ENCODE measurements at regions of chr20 and their contacts with region 1.

Region 1: GRCh38 chr20:10536531-10536930 is 101.4 kb downstream of the SLX4IP start:
- DNase-seq: peak; percentile 53
- ATAC-seq: no peak
- H3K4me3 Mint-ChIP-seq: no peak overlapping the region
- H3K27ac Mint-ChIP-seq: no peak overlapping the region
- H3K4me1 Mint-ChIP-seq: peaks cover 11% of the 10 kb centered on the region
- H3K27me3 Mint-ChIP-seq: no peaks in the 10 kb centered on the region

Region 2: GRCh38 chr20:10443936-10444335 is 92.6 kb before region 1 on chr20:
- CTCF ChIA-PET with region 1: no interaction called
- POLR2A ChIA-PET with region 1: no interaction called
- DNase-seq: no peak
- ATAC-seq: no peak
- H3K4me3 Mint-ChIP-seq: no peak overlapping the region
- H3K27ac Mint-ChIP-seq: no peak overlapping the region
- H3K4me1 Mint-ChIP-seq: peaks cover 24% of the 10 kb centered on the region
- H3K27me3 Mint-ChIP-seq: no peaks in the 10 kb centered on the region

Region 3: GRCh38 chr20:10472871-10473270 is 63.7 kb before region 1 on chr20:
- CTCF ChIA-PET with region 1: interaction called, 13 read pairs
- POLR2A ChIA-PET with region 1: no interaction called
- DNase-seq: no peak
- ATAC-seq: no peak
- H3K4me3 Mint-ChIP-seq: no peak overlapping the region
- H3K27ac Mint-ChIP-seq: no peak overlapping the region
- H3K4me1 Mint-ChIP-seq: peaks cover 10% of the 10 kb centered on the region
- H3K27me3 Mint-ChIP-seq: no peaks in the 10 kb centered on the region

Region 4: DNA sequence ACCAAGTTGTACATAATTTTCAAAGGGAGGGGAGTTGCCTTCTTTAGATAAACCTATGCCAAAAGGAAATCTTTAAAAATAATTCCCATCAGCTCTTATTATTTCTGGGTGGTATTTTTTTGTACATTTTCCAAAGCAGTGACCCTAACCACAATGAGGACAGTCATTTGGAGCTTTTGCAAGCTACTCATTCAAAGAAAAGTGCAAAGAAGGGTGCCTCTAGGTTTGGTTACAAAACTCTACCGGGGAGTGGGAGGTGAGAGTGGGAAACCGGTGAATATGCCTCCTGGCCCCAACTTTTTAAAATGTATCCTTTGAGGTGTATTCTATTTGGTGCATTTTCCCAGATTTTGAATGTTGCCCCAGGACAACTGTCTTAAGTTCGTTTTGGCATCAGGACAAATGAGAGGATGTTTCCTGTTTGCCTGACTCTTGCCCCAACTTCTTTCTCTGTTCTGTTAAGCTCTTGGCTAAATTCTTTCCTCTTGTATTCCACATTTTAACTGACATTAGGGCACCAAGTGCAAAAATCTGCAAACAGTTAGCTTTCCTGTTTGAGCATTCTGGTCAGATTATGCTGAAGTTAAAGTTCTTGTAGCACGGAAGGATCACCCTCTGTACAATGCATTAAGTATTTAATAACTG is 22.5 kb before region 1 on chr20:
- CTCF ChIA-PET with region 1: interaction called, 16 read pairs
- POLR2A ChIA-PET with region 1: no interaction called
- DNase-seq: no peak
- ATAC-seq: no peak
- H3K4me3 Mint-ChIP-seq: no peak overlapping the region
- H3K27ac Mint-ChIP-seq: no peak overlapping the region
- H3K4me1 Mint-ChIP-seq: peaks cover 35% of the 10 kb centered on the region
- H3K27me3 Mint-ChIP-seq: no peaks in the 10 kb centered on the region

Region 5: DNA sequence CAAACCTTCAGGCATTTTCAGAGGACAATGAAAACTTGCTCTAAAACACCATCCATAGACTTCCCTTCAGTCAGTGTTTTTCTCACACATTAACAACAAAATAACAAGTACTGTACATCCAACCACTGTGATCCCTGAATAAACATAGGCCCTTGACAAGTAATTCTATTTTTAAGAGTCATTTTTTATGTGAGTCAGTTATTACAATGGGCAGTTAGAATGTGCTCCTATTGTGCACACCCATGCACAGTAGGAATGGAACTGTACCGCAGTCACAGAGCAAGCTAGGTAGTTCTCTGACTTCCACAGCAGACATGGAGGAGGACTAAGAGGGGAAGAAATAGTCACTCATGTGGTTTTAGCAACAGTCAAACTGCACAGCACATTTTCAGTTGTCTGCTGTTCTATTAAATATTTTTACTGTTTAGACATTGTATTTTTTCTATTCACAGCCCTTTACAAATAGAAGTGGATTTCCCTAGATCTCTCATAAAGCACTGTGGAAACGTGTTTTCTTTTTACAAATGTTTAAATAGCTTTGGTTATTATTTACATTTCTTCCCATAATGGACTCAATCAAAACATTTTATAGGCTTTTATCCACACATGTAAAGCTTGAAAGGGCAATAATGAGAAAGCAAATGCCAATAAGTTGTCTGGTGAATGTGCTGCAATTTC is 36.9 kb after region 1 on chr20:
- CTCF ChIA-PET with region 1: no interaction called
- POLR2A ChIA-PET with region 1: no interaction called
- DNase-seq: no peak
- ATAC-seq: no peak
- H3K4me3 Mint-ChIP-seq: no peak overlapping the region
- H3K27ac Mint-ChIP-seq: no peak overlapping the region
- H3K4me1 Mint-ChIP-seq: peaks cover 31% of the 10 kb centered on the region
- H3K27me3 Mint-ChIP-seq: no peaks in the 10 kb centered on the region